A673 (cell line): ENCODE measurements at regions of chr3 and their contacts with region 1.

Region 1: GRCh38 chr3:129736070-129736469 is 129.6 kb upstream of the PLXND1 start:
- DNase-seq: no peak
- H3K4me3 ChIP-seq: no peak overlapping the region
- H3K27ac ChIP-seq: no peak overlapping the region
- H3K4me1 ChIP-seq: peaks cover 2% of the 10 kb centered on the region
- H3K27me3 ChIP-seq: no peaks in the 10 kb centered on the region
- CTCF ChIP-seq: no peak

Region 2: DNA sequence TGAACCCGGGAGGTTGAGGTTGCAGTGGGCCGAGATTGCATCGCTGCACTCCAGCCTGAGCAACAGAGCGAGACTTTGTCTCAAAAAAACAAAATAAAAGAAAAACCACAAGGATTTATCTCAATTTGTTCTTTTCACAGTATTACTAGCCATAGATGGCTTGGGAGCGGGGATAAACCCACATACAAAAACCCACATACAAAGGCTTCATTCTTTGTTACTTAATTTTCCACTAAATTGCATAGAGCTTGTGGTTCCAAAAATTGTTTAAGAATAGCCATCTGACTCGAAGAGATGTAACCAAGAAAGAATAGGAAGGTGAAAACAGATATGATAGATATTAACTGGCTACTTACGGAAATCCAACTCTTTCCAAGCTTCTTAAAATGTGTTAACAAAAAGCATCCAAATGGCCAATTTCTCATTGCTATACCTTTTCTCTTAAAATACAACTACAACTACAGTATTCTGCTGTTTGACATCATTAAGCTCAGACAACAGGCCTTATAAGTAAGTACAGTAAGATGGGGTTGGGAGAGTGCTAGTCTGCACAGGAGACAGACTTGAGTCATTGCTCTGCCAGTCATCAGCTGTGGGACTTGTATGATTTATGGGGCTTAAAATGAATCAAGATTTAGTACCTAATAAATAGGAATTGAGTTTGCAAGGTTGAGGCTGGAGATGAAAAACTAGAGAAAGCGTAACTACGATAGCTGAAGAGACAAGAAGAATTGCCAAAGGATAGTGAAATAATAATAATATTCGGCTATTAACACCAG is 32.9 kb before region 1 on chr3:
- CTCF ChIA-PET with region 1: no interaction called
- POLR2A ChIA-PET with region 1: no interaction called
- intact Hi-C with region 1: no loop called
- DNase-seq: no peak
- H3K4me3 ChIP-seq: no peak overlapping the region
- H3K27ac ChIP-seq: no peak overlapping the region
- H3K4me1 ChIP-seq: peaks cover 31% of the 10 kb centered on the region
- H3K27me3 ChIP-seq: no peaks in the 10 kb centered on the region
- CTCF ChIP-seq: no peak

Region 3: DNA sequence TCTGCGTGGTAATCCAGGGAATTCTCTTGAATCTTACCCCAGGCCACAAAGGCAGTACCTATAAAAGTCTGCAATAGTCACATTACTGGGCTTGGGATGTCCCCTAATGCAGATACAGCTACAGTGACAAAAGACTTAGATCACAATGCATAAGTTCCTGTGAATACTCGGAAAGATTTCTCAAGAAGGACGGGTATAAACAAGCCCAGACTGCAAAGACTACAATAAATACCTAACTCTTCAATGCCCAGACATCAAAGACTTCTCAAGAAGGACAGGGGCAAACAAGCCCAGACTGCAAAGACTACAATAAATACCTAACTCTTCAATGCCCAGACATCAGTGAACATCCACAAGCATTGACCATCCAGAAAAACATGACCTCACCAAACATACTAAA is 1696.4 kb after region 1 on chr3:
- CTCF ChIA-PET with region 1: no interaction called
- POLR2A ChIA-PET with region 1: interaction called, 26 read pairs
- intact Hi-C with region 1: no loop called
- DNase-seq: no peak
- H3K4me3 ChIP-seq: no peak overlapping the region
- H3K27ac ChIP-seq: no peak overlapping the region
- H3K4me1 ChIP-seq: no peaks in the 10 kb centered on the region
- H3K27me3 ChIP-seq: no peaks in the 10 kb centered on the region
- CTCF ChIP-seq: no peak